HEK293 (cell line): ENCODE measurements at regions of chr19 and their contacts with region 1.

Region 1: GRCh38 chr19:48492925-48493717 is 18.5 kb downstream of the LMTK3 start:
- H3K4me3 ChIP-seq: peak overlapping the region; percentile 23
- H3K27ac ChIP-seq: no peak overlapping the region
- H3K4me1 ChIP-seq: peaks cover 6% of the 10 kb centered on the region
- CTCF ChIP-seq: no peak

Region 2: GRCh38 chr19:48454150-48454730 is 38.9 kb before region 1 on chr19:
- CTCF ChIA-PET with region 1: no interaction called
- POLR2A ChIA-PET with region 1: interaction called, 11 read pairs
- H3K4me3 ChIP-seq: no peak overlapping the region
- H3K27ac ChIP-seq: no peak overlapping the region
- H3K4me1 ChIP-seq: no peaks in the 10 kb centered on the region
- CTCF ChIP-seq: no peak

Region 3: DNA sequence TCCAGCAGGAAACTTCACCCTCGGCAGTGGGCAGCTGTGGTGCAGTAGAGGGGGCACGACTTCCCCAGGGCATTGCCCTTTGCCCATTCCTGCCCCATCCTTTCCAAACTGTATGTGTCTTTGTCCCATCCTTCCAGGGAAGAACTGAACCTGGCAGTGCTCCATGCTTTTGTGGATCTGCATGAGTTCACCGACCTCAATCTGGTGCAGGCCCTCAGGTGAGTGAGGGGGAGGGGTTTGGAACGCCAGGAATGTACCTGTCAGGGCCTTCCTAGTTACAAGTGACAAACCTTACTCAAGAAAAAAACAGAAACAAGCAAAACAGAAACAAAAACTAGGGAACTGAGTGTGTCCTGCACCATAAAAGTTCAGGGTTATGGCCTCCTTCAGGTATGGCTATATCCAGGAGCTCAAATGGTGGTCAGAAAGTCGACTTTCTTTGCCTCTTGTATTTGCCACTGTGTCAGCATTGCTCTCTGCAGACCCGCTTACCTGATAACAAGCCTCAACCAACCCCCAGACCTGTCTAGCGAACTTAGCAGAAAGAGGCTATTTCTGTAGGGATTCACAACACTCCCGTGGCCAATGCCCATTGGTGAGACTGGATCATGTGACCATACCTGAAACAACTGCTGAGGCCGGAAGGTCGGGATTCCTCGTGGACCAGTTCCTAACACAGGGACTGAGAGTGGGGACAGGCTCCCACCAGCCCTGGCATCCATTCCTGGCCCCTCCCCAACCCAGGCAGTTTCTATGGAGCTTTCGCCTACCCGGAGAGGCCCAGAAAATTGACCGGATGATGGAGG is 19.8 kb before region 1 on chr19:
- CTCF ChIA-PET with region 1: interaction called, 18 read pairs
- POLR2A ChIA-PET with region 1: interaction called, 8 read pairs
- H3K4me3 ChIP-seq: no peak overlapping the region
- H3K27ac ChIP-seq: no peak overlapping the region
- H3K4me1 ChIP-seq: peaks cover 7% of the 10 kb centered on the region
- CTCF ChIP-seq: no peak

Region 4: GRCh38 chr19:48480558-48481500 is 12.3 kb before region 1 on chr19:
- CTCF ChIA-PET with region 1: interaction called, 18 read pairs
- POLR2A ChIA-PET with region 1: interaction called, 8 read pairs
- H3K4me3 ChIP-seq: no peak overlapping the region
- H3K27ac ChIP-seq: no peak overlapping the region
- H3K4me1 ChIP-seq: no peaks in the 10 kb centered on the region
- CTCF ChIP-seq: no peak

Region 5: DNA sequence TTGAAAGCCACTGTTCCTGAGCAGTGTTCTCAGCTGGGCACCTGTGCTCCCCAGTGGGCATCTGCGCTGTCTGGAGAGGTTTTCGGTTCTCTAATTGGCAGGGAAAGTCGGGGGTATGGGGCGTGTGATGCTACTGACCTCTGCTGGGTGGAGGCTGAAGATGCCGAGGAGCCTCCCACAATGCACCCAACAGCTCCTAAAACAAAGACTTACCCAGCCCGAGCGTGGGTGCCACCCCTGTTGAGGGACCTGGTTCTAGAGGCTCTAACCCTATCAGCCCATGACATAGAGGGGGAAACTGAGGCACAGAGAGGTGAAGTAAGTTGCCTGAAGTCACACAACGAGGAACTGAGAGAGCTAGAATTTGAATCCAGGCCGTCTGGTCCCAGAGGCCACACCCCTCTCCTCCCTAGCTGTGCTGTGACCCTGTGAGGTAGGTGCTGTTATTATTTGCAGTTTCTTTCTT is 115.7 kb after region 1 on chr19:
- CTCF ChIA-PET with region 1: interaction called, 18 read pairs
- POLR2A ChIA-PET with region 1: interaction called, 6 read pairs
- H3K4me3 ChIP-seq: no peak overlapping the region
- H3K27ac ChIP-seq: no peak overlapping the region
- H3K4me1 ChIP-seq: no peaks in the 10 kb centered on the region; the same call in 1 of the 2 replicates
- CTCF ChIP-seq: peak; percentile 86